Panc1 (cell line): ENCODE measurements at regions of chr3 and their contacts with region 1.

Region 1: DNA sequence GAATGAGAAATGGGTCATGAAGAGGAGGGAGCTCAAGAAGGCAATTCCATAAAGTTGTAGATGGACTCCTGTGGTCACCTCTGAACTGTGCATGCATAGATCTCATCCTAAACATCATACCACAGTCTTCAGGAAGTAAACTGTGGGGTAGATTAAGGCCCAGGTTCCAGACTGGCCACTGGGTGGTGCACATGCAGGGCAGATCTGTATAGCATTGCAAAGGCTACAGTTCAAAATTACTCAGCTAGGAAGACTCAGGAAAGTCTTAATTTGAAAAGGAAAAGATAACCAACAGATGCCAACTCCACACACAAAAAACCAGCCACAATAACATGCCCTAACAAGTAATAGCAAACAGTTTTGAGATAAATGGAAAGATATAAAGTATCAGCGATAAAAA is 20.3 kb downstream of the KY start:
- DNase-seq: no peak
- ATAC-seq: no peak
- H3K4me3 ChIP-seq: no peak overlapping the region
- H3K27ac ChIP-seq: no peak overlapping the region
- H3K4me1 ChIP-seq: no peaks in the 10 kb centered on the region; the same call in 1 of the 2 replicates
- H3K27me3 ChIP-seq: 0 out of 2 replicates have a peak, but pooled peaks cover 3% of the 10 kb centered on the region
- CTCF ChIP-seq: no peak; the same call in 1 of the 2 replicates

Region 2: DNA sequence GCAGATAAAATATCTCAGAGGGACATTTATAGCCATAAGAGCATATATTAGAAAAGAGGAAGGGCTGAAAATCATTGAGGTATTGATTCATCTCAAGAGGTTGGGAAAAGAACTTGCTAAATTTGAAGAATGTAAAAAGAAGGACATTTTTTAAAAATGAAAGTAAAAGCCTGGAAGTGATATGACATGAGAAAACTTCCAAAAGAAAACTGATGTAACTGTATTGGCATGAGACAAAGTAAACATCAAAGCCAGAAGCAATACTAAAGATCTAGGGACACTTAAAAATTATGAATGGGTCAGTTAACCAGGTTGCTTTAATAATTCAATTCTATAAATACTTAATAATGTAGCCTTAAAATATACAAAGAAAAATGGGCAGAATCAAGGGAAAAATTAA is 112.7 kb before region 1 on chr3:
- CTCF ChIA-PET with region 1: no interaction called
- POLR2A ChIA-PET with region 1: no interaction called
- in situ Hi-C with region 1: no loop called
- intact Hi-C with region 1: no loop called
- DNase-seq: no peak
- ATAC-seq: no peak
- H3K4me3 ChIP-seq: no peak overlapping the region
- H3K27ac ChIP-seq: no peak overlapping the region
- H3K4me1 ChIP-seq: no peaks in the 10 kb centered on the region
- H3K27me3 ChIP-seq: no peaks in the 10 kb centered on the region
- CTCF ChIP-seq: no peak

Region 3: GRCh38 chr3:134810850-134811249 is 180.3 kb after region 1 on chr3:
- CTCF ChIA-PET with region 1: interaction called, 11 read pairs
- POLR2A ChIA-PET with region 1: no interaction called
- in situ Hi-C with region 1: no loop called
- intact Hi-C with region 1: no loop called
- DNase-seq: no peak
- ATAC-seq: no peak
- H3K4me3 ChIP-seq: no peak overlapping the region
- H3K27ac ChIP-seq: no peak overlapping the region
- H3K4me1 ChIP-seq: no peaks in the 10 kb centered on the region
- H3K27me3 ChIP-seq: peaks cover 15% of the 10 kb centered on the region
- CTCF ChIP-seq: no peak